Activated T-helper 2 cell treated with anti-CD3 and anti-CD28 coated beads, Interferon-gamma antibody, Interleukin-2, Interleukin-4, amounts not matched to agents 10 μg/mL and 5 μg/mL and 100 μg/mL, durations not matched to agents 14 hours and 24 hours and 36 hours (primary cell): ENCODE measurements at regions of chr17 and their contacts with region 1.

Region 1: DNA sequence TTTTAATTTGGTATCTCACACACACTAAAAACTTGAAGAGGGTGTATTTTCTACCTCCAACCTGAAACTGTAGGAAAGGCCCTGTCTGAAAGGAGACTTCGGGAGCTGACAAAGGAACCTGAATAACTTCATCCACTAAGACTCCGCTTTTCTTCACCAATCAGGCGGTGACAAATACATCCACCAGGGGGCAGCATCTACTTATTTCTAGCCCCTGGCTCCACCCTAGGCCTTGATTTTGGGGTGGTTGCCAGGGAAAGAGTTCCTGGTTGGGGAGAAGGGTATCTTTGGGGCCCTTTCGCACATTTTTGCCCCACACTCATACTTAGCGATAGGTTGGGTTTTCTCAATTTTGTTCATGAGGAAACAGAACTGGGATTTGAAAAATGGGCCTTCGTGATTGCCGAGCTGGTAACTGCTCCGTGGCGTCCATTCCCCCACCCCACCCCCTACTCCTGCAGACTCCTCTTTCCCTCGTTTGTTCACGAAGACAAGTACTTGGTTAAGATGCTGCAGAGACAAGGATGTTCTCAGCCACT is 4.8 kb upstream of the ARL4D start:
- DNase-seq: peak; percentile 81
- H3K4me3 Mint-ChIP-seq: no peak overlapping the region
- H3K27ac Mint-ChIP-seq: peak overlapping the region; percentile 2
- H3K4me1 Mint-ChIP-seq: peaks cover 27% of the 10 kb centered on the region
- H3K27me3 Mint-ChIP-seq: no peaks in the 10 kb centered on the region

Region 2: DNA sequence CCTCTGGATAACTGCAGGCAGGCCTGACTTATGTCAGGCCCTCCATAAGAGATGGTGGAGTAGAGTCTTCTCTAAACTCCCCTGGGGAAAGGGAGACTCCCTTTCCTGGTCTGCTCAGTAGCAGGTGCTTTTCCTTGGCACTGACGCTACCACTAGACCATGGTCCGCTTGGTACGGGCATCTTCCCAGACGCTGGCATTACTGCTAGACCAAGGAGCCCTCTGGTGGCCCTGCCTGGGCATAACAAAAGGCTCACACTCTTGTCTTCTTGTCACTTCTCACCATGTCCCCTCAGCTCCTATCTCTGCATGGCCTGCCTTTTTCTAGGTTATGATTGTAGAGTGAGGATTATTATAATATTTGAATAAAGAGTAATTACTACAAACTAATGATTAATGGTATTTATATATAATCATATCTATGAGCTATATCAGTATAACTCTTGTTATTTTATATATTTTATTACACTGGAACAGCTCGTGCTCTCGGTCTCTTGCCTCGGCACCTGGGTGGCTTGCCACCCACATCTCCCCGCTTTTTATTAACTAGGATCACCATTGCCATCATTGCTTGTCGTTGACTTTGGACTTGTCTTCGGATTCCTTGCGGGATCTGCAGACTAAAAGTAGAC is 55.0 kb before region 1 on chr17:
- intact Hi-C with region 1: loop called (anchors 10 kb)
- DNase-seq: peak; percentile 46
- H3K4me3 Mint-ChIP-seq: no peak overlapping the region
- H3K27ac Mint-ChIP-seq: no peak overlapping the region
- H3K4me1 Mint-ChIP-seq: peaks cover 35% of the 10 kb centered on the region
- H3K27me3 Mint-ChIP-seq: no peaks in the 10 kb centered on the region

Region 3: GRCh38 chr17:43367737-43368242 is 26.2 kb before region 1 on chr17:
- intact Hi-C with region 1: loop called (anchors 1 kb)
- DNase-seq: peak; percentile 57
- H3K4me3 Mint-ChIP-seq: peak overlapping the region; percentile 86
- H3K27ac Mint-ChIP-seq: peak overlapping the region; percentile 100
- H3K4me1 Mint-ChIP-seq: peaks cover 54% of the 10 kb centered on the region
- H3K27me3 Mint-ChIP-seq: no peaks in the 10 kb centered on the region

Region 4: GRCh38 chr17:43381204-43381603 is 12.8 kb before region 1 on chr17:
- intact Hi-C with region 1: no loop called
- DNase-seq: no peak
- H3K4me3 Mint-ChIP-seq: no peak overlapping the region
- H3K27ac Mint-ChIP-seq: no peak overlapping the region
- H3K4me1 Mint-ChIP-seq: peaks cover 8% of the 10 kb centered on the region
- H3K27me3 Mint-ChIP-seq: no peaks in the 10 kb centered on the region

Region 5: DNA sequence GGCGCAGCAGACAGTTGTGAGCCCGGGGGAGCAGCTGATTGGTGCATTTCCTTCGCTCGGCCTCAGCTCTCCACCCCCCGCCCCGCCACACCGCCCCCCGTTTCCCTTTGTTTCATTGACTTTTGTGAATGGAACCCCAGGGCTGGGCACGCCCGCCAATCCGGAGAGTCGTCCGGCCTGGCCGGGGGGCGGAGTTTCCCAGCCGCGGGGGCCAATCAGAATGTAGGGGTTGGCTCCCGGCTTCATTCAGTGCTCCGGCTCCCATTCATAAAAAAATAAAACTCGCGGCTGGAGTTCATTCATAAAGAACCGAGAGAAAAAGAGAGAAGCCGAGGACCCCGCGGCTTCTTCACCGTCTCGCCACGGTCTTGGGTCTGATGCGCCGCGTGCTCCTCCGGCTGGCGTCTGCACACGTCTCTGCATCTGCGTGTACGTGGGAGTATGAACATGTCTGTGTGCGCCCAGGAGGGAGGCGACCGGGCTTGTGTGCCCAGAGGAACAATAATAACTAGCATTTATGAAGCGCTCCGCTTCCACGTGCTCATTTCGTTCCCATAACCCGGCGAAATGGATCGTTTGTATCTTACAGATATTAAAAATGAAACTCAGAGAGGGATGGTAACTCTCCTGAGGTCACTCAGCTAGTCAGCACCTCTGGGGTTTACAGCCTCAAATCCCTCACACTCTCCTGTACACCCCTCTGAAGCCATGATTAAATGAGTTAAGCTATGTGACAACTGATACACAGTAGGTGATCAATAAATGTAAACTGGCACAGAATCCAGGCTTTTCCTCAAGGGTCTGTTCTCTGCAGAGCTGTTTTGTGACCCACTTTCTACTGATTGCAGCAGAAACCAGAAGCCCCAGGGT is 152.5 kb after region 1 on chr17 and contains the start of gene ETV4:
- intact Hi-C with region 1: loop called (anchors 10 kb)
- DNase-seq: peak; percentile 91
- H3K4me3 Mint-ChIP-seq: peak within 1 kb of the TSS; percentile 90
- H3K27ac Mint-ChIP-seq: peak within 1 kb of the TSS; percentile 77
- H3K4me1 Mint-ChIP-seq: peaks cover 19% of the 10 kb centered on the region
- H3K27me3 Mint-ChIP-seq: peaks cover 46% of the 10 kb centered on the region
- total RNA-seq, gene ETV4: 11.0 and 12.8 TPM in 2 replicates

Region 6: DNA sequence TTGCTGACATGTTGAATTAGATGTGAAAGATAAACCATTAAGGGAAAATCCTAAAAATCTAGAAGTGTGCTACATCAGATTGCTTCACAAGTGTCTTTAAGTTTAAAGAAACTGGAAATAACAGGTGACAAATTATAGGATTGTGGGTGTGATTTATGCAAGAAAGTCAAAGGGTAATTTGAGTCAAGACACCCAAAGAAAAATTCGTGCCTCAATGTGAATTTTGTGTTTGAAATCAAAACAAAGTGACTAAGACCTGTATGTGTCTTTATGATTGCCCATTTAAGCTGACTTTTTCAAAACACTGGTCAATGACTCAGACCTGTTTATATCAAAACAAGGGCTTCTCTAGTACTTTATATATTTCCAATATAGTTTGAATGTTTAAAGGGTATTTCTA is 564.9 kb after region 1 on chr17:
- intact Hi-C with region 1: no loop called
- DNase-seq: no peak
- H3K4me3 Mint-ChIP-seq: no peak overlapping the region
- H3K27ac Mint-ChIP-seq: no peak overlapping the region
- H3K4me1 Mint-ChIP-seq: no peaks in the 10 kb centered on the region
- H3K27me3 Mint-ChIP-seq: peaks cover 17% of the 10 kb centered on the region